ENCODE measurements at regions of chr12 and their contacts with region 1.

Region 1: GRCh38 chr12:49018261-49019119 is at the start of gene PRKAG1:
- DNase-seq: peak; percentile 100
- H3K4me3 ChIP-seq: peak within 1 kb of the TSS; percentile 83 to 97 (median 89)
- H3K27ac ChIP-seq: peak within 1 kb of the TSS; percentile 97 to 98
- H3K4me1 ChIP-seq: peaks cover 7 to 33% (median 28%) of the 10 kb centered on the region in 4 experiments
- H3K27me3 ChIP-seq: no peaks in the 10 kb centered on the region

Region 2: GRCh38 chr12:48988030-48988649 is 30.4 kb before region 1 on chr12:
- CTCF ChIA-PET with region 1: interaction called, 271 read pairs
- POLR2A ChIA-PET with region 1: interaction called, 4 read pairs
- DNase-seq: peak; percentile 47 to 69 (median 60)
- H3K4me3 ChIP-seq: no peak overlapping the region
- H3K27ac ChIP-seq: no peak overlapping the region
- H3K4me1 ChIP-seq: no peaks in the 10 kb centered on the region
- H3K27me3 ChIP-seq: peaks cover 5 to 73% (median 38%) of the 10 kb centered on the region in 5 experiments

Region 3: GRCh38 chr12:49031553-49032162 is 13.2 kb after region 1 on chr12:
- CTCF ChIA-PET with region 1: interaction called, 72 read pairs
- POLR2A ChIA-PET with region 1: interaction called, 14 read pairs
- DNase-seq: no peak
- H3K4me3 ChIP-seq: no peak overlapping the region
- H3K27ac ChIP-seq: no peak overlapping the region
- H3K4me1 ChIP-seq: no peaks in the 10 kb centered on the region
- H3K27me3 ChIP-seq: no peaks in the 10 kb centered on the region

Region 4: DNA sequence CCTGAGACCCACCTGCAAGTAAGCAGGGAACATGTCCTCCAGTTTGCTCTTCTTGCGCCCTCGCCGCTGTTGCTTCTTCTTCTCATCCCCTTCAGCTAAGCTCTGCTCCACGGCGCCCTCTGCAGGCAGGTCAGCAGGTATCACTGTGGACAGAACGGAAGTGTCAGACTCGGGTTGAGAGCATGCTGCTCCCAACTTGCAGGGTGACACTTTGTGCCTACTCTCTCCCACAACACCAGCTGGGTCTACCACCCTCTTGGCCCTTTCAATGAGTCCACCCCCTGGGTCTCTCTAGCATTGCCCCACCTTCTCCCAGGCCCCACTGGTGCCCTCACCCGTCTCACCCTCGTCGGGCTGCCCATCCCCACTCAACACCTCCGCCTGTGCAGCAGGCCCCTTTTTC is 25.4 kb after region 1 on chr12:
- CTCF ChIA-PET with region 1: interaction called, 72 read pairs
- POLR2A ChIA-PET with region 1: interaction called, 4 read pairs
- DNase-seq: peak; percentile 64 to 84 (median 79)
- H3K4me3 ChIP-seq: no peak overlapping the region
- H3K27ac ChIP-seq: no peak overlapping the region
- H3K4me1 ChIP-seq: no peaks in the 10 kb centered on the region
- H3K27me3 ChIP-seq: no peaks in the 10 kb centered on the region

Region 5: DNA sequence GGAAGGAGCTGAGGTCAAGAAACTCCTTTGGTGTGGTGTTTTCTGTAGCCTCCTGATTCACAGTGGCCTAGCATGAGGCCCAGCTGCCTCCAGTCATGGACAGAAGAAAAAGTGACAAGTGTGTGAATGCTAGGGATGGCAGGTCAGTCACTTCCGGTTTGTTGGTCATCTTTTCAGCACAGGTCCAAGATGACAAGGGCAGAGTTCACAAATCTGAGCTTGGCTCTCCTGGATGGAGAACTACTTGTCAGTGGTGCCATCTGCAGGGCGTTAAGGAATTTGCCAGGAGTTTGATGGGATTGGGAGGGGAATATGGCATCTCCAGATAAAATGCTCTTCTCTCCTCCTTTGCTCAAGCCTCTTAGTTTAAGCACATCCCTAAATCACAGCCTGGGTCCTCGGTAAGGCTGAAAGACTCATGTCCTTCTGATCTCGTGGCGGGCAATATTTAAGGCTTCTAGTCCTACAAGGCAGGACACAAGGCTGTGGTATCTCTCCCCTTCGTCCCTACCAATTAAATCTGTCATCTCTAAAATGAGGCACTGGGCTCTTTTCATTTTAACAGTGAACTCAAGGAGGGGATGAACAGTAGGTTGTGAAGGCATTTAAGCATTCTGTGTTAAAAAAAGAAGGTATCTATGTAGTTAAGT is 102.7 kb after region 1 on chr12:
- CTCF ChIA-PET with region 1: no interaction called
- POLR2A ChIA-PET with region 1: no interaction called
- DNase-seq: peak in 1 of 3 donors; percentile 19
- H3K4me3 ChIP-seq: no peak overlapping the region
- H3K27ac ChIP-seq: no peak overlapping the region
- H3K4me1 ChIP-seq: no peaks in the 10 kb centered on the region
- H3K27me3 ChIP-seq: no peaks in the 10 kb centered on the region